Activated CD4-positive, alpha-beta T cell treated with anti-CD3 and anti-CD28 coated beads for 36 hours (primary cell): ENCODE measurements at regions of chr19 and their contacts with region 1.

Region 1: DNA sequence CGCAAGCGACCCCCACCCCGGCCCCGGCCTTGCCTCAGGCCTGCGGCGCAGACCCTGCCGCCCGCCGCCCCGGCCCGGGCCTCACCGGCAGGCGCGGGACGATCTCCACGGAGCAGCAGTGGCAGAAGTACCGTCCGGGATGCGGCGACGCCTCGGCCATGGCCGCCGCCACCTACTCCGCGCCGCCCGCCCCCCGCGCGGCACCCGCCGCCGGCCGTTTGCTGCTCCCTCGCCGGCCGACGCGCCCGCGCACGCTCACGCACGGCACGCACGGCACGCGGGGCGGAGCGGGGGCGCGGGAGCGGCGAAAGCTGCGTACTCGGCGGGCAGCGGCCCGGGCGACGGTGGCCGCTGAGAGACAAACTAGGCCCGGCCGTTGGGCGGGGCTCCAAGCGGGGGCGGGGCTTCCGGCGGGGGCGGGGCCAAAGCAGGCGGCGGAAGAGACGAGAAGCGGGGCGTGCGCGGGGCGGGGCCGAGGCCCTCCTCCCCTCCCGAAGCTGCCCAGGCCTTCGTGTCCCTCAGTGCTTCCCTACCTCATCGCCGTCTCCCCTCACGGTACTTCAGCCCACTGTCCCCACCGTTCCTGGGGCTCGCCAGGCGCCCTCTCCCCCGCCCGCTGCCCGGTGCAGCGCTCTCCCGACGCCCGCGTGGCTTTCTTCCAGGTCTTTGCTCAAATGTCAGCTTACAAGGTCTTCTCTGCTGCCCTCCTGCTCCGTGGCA is at the start of gene RNF126:
- DNase-seq: peak; percentile 98
- ATAC-seq: peak; percentile 49
- H3K4me3 Mint-ChIP-seq: peak within 1 kb of the TSS; percentile 96
- H3K27ac Mint-ChIP-seq: peak within 1 kb of the TSS; percentile 95
- H3K4me1 Mint-ChIP-seq: peaks cover 37% of the 10 kb centered on the region
- H3K27me3 Mint-ChIP-seq: no peaks in the 10 kb centered on the region
- total RNA-seq, gene RNF126: 83.0 to 91.3 TPM

Region 2: GRCh38 chr19:572140-572742 is 90.9 kb before region 1 on chr19 and contains the start of gene BSG:
- CTCF ChIA-PET with region 1: no interaction called
- POLR2A ChIA-PET with region 1: interaction called, 3 read pairs
- intact Hi-C with region 1: loop called (anchors 1 to 5 kb)
- DNase-seq: peak; percentile 99
- ATAC-seq: peak; percentile 87
- H3K4me3 Mint-ChIP-seq: peak within 1 kb of the TSS; percentile 90
- H3K27ac Mint-ChIP-seq: peak within 1 kb of the TSS; percentile 95
- H3K4me1 Mint-ChIP-seq: peaks cover 36% of the 10 kb centered on the region
- H3K27me3 Mint-ChIP-seq: no peaks in the 10 kb centered on the region
- total RNA-seq, gene BSG: 165 to 175 TPM

Region 3: GRCh38 chr19:639253-640160 is 23.6 kb before region 1 on chr19 and contains the start of gene FGF22:
- CTCF ChIA-PET with region 1: interaction called, 4 read pairs
- POLR2A ChIA-PET with region 1: no interaction called
- intact Hi-C with region 1: loop called in 1 of 2 experiments (anchors 1 kb)
- DNase-seq: peak; percentile 98
- ATAC-seq: peak; percentile 97
- H3K4me3 Mint-ChIP-seq: peak within 1 kb of the TSS; percentile 70
- H3K27ac Mint-ChIP-seq: peak within 1 kb of the TSS; percentile 64
- H3K4me1 Mint-ChIP-seq: peaks cover 6% of the 10 kb centered on the region
- H3K27me3 Mint-ChIP-seq: peaks cover 2% of the 10 kb centered on the region
- total RNA-seq, gene FGF22: not detected

Region 4: GRCh38 chr19:860481-861101 is 197.5 kb after region 1 on chr19:
- CTCF ChIA-PET with region 1: no interaction called
- POLR2A ChIA-PET with region 1: no interaction called
- intact Hi-C with region 1: loop called in 1 of 2 experiments (anchors 2 kb)
- DNase-seq: peak; percentile 73
- ATAC-seq: peak; percentile 17
- H3K4me3 Mint-ChIP-seq: no peak overlapping the region
- H3K27ac Mint-ChIP-seq: no peak overlapping the region
- H3K4me1 Mint-ChIP-seq: peaks cover 13% of the 10 kb centered on the region
- H3K27me3 Mint-ChIP-seq: peaks cover 13% of the 10 kb centered on the region

Region 5: GRCh38 chr19:1020868-1021425 is 357.8 kb after region 1 on chr19 and contains the start of gene TMEM259:
- CTCF ChIA-PET with region 1: no interaction called
- POLR2A ChIA-PET with region 1: no interaction called
- intact Hi-C with region 1: loop called in 1 of 2 experiments (anchors 2 kb)
- DNase-seq: peak; percentile 99
- ATAC-seq: peak; percentile 90
- H3K4me3 Mint-ChIP-seq: peak within 1 kb of the TSS; percentile 94
- H3K27ac Mint-ChIP-seq: peak within 1 kb of the TSS; percentile 96
- H3K4me1 Mint-ChIP-seq: peaks cover 35% of the 10 kb centered on the region
- H3K27me3 Mint-ChIP-seq: no peaks in the 10 kb centered on the region
- total RNA-seq, gene TMEM259: 106 to 128 TPM

Region 6: GRCh38 chr19:1249298-1249989 is 586.3 kb after region 1 on chr19:
- CTCF ChIA-PET with region 1: no interaction called
- POLR2A ChIA-PET with region 1: no interaction called
- intact Hi-C with region 1: loop called in 1 of 2 experiments (anchors 2 kb)
- DNase-seq: peak; percentile 97
- ATAC-seq: peak; percentile 53
- H3K4me3 Mint-ChIP-seq: peak overlapping the region; percentile 73
- H3K27ac Mint-ChIP-seq: no peak overlapping the region
- H3K4me1 Mint-ChIP-seq: peaks cover 9% of the 10 kb centered on the region
- H3K27me3 Mint-ChIP-seq: no peaks in the 10 kb centered on the region